HCT116 (cell line): ENCODE measurements at regions of chr17 and their contacts with region 1.

Region 1: GRCh38 chr17:21126645-21127510 is at the start of gene DHRS7B:
- DNase-seq: peak; percentile 95
- ATAC-seq: peak; percentile 94
- H3K4me3 ChIP-seq: peak within 1 kb of the TSS; percentile 76 to 94
- H3K27ac ChIP-seq: peak within 1 kb of the TSS; percentile 64
- H3K4me1 ChIP-seq: peaks cover 8 to 16% of the 10 kb centered on the region in 2 experiments
- H3K27me3 ChIP-seq: no peaks in the 10 kb centered on the region
- CTCF ChIP-seq: no peak
- POLR2A ChIP-seq: peak; percentile 81
- RAD21 ChIP-seq: no peak
- total RNA-seq, gene DHRS7B: 19.6 TPM

Region 2: DNA sequence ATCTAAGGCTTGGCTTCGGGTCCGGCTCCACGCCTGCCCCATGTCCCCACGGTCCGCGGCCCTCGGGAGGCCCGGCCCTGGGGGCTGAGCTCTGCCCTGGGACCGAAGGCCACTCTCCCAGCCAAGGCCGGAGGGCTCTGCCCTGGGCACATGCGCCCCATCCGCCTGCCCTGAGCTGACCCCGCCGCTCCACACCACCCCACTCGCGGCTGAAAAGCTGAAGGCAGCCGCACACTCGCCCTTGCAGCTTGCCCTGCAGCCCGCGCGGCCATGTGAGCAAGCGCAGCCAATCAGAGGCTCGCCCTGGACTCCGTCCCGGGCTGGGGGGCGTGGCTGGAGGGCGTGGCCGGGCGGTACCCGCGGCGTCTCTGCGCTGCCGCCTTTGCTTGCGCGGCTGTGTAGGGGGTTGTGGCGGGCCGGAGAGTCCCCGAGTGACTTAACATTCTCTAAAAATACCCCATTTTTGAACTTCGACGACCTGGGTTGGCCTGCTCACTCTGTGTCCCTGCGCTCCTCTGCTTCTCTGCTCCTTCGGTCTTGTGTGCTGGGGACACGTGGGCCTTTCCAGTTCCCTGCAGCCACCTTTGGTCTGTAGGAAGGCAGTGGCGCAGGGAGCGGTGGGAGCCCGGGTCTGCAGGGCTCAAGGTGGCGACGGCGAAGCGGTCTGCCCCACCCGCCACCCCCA is 148.8 kb after region 1 on chr17:
- CTCF ChIA-PET with region 1: interaction called, 4 read pairs
- POLR2A ChIA-PET with region 1: no interaction called
- RAD21 ChIA-PET with region 1: no interaction called
- intact Hi-C with region 1: loop called (anchors 2 kb)
- DNase-seq: no peak
- ATAC-seq: peak; percentile 88
- H3K4me3 ChIP-seq: peak overlapping the region; percentile 52 to 57
- H3K27ac ChIP-seq: peak overlapping the region; percentile 65; the same call in 1 of the 2 replicates
- H3K4me1 ChIP-seq: peaks cover 23 to 52% of the 10 kb centered on the region in 2 experiments
- H3K27me3 ChIP-seq: no peaks in the 10 kb centered on the region
- CTCF ChIP-seq: no peak
- POLR2A ChIP-seq: peak; percentile 73
- RAD21 ChIP-seq: no peak